ENCODE measurements at regions of chr12 and their contacts with region 1.

Region 1: DNA sequence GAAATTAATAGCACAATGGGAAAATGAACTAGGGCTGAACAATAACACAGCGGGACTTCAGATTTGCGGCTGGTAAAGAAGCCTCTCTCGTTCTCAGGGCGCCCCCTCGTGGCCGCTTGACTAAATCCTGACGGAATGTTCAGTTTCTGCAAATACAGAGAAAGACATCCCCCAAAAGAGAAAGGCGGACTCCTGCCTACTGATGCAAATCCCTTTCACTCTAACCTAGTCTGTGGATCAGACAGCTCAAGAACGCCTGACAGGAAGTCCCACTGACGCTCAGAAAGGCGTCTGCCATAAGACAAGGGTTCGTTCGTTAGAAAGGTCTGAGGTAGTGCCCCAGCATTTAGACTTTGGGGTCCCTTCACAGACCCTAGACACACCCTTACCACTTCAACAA is 2.5 kb downstream of the NUAK1 start:
- DNase-seq: peak; percentile 64 to 93
- ATAC-seq: peak; percentile 36

Region 2: DNA sequence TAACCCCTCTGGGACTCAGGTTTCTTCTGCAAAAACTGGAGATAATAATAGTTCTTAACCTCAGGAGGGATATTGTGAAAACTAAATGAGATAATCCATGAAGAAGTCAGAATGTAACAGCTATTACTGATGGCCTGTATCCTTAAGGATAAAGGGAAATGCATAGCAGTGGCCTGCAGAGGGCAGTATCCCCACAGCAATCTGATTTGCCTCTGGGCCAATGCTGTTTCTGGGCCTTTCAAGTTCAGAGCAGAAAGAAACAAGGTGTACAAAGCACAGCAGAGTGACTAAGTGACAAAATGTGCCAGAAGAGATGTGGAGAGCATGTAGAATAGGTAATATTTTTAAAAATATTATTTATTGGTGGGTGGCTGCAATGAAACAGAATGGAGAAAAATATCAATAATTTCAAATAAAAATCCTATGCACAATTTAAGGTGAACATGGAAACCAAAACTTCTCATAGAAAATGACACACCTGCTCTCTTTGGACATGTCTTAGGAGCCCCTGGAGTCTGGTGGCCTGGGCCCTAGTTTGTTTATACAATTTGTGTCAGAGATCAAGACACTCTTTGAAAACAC is 715.5 kb before region 1 on chr12:
- intact Hi-C with region 1: loop called in 1 of 2 experiments (anchors 2 kb)
- DNase-seq: peak; percentile 45 to 67
- ATAC-seq: peak; percentile 91

Region 3: GRCh38 chr12:105705765-105706164 is 430.5 kb before region 1 on chr12:
- intact Hi-C with region 1: loop called in 1 of 2 experiments (anchors 5 kb)
- DNase-seq: peak in 1 of 2 donors; percentile 26
- ATAC-seq: peak; percentile 55

Region 4: DNA sequence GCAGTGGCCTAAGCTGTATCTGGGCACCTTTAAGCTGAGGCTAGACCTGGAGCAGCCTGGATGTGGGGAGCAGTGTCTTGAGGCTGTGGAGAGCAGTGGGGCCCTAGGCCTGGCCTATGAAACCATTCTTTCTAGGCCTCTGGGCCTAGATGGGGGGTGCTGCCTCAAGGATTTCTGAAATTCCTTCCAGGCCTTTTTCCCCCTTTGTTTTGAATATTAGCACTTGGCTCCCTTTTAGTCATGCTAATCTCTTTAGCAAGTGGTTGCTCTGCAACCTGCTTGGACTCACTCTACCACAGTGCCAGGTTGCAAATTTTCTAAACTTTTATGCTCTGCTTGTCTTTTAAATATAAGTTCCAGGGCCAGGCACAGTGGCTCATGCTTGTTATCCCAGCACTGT is 404.9 kb after region 1 on chr12:
- intact Hi-C with region 1: no loop called
- DNase-seq: no peak
- ATAC-seq: no peak

Measured in left colon (tissue), 2 donors.